CD14-positive monocyte (primary cell): ENCODE measurements at regions of chr4 and their contacts with region 1.

Region 1: GRCh38 chr4:101169044-101170014 is 178.0 kb downstream of the PPP3CA start:
- DNase-seq: peak; percentile 49 to 71 (median 69)
- H3K4me3 ChIP-seq: no peak overlapping the region
- H3K4me3 Mint-ChIP-seq: no peak overlapping the region
- H3K27ac ChIP-seq: no peak overlapping the region
- H3K27ac Mint-ChIP-seq: no peak overlapping the region
- H3K4me1 ChIP-seq: no peaks in the 10 kb centered on the region
- H3K4me1 Mint-ChIP-seq: peaks cover 7% of the 10 kb centered on the region
- H3K27me3 ChIP-seq: no peaks in the 10 kb centered on the region
- H3K27me3 Mint-ChIP-seq: no peaks in the 10 kb centered on the region
- CTCF ChIP-seq: peak; percentile 86

Region 2: GRCh38 chr4:101730291-101731117 is 561.2 kb after region 1 on chr4:
- intact Hi-C with region 1: loop called in 1 of 2 experiments (anchors 5 kb)
- DNase-seq: peak; percentile 32 to 52 (median 44)
- H3K4me3 ChIP-seq: no peak overlapping the region
- H3K4me3 Mint-ChIP-seq: no peak overlapping the region
- H3K27ac ChIP-seq: no peak overlapping the region
- H3K27ac Mint-ChIP-seq: no peak overlapping the region
- H3K4me1 ChIP-seq: no peaks in the 10 kb centered on the region
- H3K4me1 Mint-ChIP-seq: no peaks in the 10 kb centered on the region
- H3K27me3 ChIP-seq: no peaks in the 10 kb centered on the region
- H3K27me3 Mint-ChIP-seq: peaks cover 0 to 2% (median 0%) of the 10 kb centered on the region in 3 donors
- CTCF ChIP-seq: peak; percentile 79